Sigmoid colon (tissue), 7 donors: ENCODE measurements at regions of chr18 and their contacts with region 1.

Region 1: GRCh38 chr18:79964330-79965118 is at the start of gene HSBP1L1:
- DNase-seq: peak; percentile 73
- H3K4me3 ChIP-seq: peak within 1 kb of the TSS; percentile 39 to 72 (median 66)
- H3K27ac ChIP-seq: peak within 1 kb of the TSS; percentile 64 to 80 (median 74)
- H3K4me1 ChIP-seq: peaks cover 0 to 19% (median 11%) of the 10 kb centered on the region in 4 donors
- H3K27me3 ChIP-seq: peaks cover 0 to 27% (median 0%) of the 10 kb centered on the region in 3 donors
- CTCF ChIP-seq: peak in 2 of 4 experiments; percentile 35 to 38
- EP300 ChIP-seq: no peak
- POLR2A ChIP-seq: no peak
- total RNA-seq, gene HSBP1L1: 15.8 to 21.0 (median 19.3) TPM

Region 2: GRCh38 chr18:79951578-79952455 is 12.7 kb before region 1 on chr18 and contains the start of gene SLC66A2:
- intact Hi-C with region 1: loop called (anchors 1 kb)
- DNase-seq: peak; percentile 94
- H3K4me3 ChIP-seq: peak within 1 kb of the TSS; percentile 90 to 100 (median 98)
- H3K27ac ChIP-seq: peak within 1 kb of the TSS; percentile 82 to 88 (median 86)
- H3K4me1 ChIP-seq: peaks cover 0 to 47% (median 33%) of the 10 kb centered on the region in 4 donors
- H3K27me3 ChIP-seq: no peaks in the 10 kb centered on the region
- CTCF ChIP-seq: no peak
- EP300 ChIP-seq: no peak
- POLR2A ChIP-seq: peak in 1 of 2 donors; percentile 33
- total RNA-seq, gene SLC66A2: 27.3 to 33.2 (median 32.0) TPM